GM10248 (cell line): ENCODE measurements at regions of chr5 and their contacts with region 1.

Region 1: GRCh38 chr5:142713121-142713706 is 27.3 kb upstream of the FGF1 start:
- DNase-seq: peak; percentile 82
- CTCF ChIP-seq: peak; percentile 97

Region 2: GRCh38 chr5:142655339-142656267 is 57.6 kb before region 1 on chr5:
- CTCF ChIA-PET with region 1: interaction called, 15 read pairs
- POLR2A ChIA-PET with region 1: no interaction called
- DNase-seq: peak; percentile 86
- CTCF ChIP-seq: peak; percentile 96

Region 3: GRCh38 chr5:142726188-142726731 is 13.0 kb after region 1 on chr5:
- CTCF ChIA-PET with region 1: interaction called, 66 read pairs
- POLR2A ChIA-PET with region 1: no interaction called
- DNase-seq: no peak
- CTCF ChIP-seq: no peak

Region 4: DNA sequence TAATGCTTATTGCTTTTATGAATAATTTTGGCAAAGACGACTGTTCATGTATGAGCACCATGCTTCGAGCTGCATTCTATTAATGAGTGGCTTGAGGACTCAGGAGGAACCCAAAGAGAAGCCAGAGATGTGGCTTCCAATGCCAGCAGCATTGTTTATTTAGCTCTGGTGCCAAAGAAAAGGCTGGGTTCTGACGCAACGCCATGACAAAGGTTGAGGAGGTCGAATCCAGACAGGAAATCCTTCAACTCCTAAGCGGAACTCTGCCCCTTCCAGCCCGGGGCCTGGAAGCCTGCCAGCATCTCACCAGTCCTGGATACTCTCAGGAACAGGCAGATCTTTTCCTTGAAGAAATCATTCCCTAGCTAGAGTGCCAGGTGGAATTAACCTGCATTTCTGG is 161.3 kb after region 1 on chr5:
- CTCF ChIA-PET with region 1: interaction called, 141 read pairs
- POLR2A ChIA-PET with region 1: no interaction called
- DNase-seq: no peak
- CTCF ChIP-seq: no peak

Region 5: GRCh38 chr5:142888469-142889085 is 175.4 kb after region 1 on chr5:
- CTCF ChIA-PET with region 1: interaction called, 141 read pairs
- POLR2A ChIA-PET with region 1: no interaction called
- DNase-seq: peak; percentile 44
- CTCF ChIP-seq: peak; percentile 63

Region 6: DNA sequence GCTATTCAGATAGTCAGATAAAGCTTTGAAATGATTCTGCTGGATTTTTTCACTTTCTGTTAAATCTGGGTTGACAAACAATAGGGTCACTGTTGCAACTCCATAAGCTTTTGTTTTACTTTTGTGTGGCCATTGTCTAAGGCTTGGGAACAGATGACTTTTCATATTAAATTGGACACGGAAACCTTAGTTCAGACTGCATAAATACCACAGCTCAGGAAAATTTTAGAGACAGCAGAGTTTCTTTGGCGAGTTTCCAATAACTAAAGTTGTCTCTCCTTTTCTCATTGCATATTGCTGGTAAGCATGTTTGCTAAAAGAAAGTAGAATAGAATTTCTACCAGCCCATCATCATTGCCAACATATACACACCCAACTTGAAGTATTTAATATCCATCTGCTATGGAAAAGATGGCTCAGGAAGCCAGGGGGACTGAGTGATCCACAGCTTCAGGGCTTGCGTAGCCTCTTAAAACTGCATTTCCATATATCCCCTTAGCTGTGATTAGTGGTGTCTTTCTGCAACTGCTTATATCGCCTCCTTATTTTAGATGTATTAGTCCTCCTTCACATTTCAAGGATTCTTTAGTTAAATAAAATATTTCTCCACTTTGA is 225.2 kb after region 1 on chr5:
- CTCF ChIA-PET with region 1: no interaction called
- POLR2A ChIA-PET with region 1: no interaction called
- DNase-seq: no peak
- CTCF ChIP-seq: no peak